Adrenal gland (tissue), 19 donors: ENCODE measurements at regions of chr17 and their contacts with region 1.

Region 1: DNA sequence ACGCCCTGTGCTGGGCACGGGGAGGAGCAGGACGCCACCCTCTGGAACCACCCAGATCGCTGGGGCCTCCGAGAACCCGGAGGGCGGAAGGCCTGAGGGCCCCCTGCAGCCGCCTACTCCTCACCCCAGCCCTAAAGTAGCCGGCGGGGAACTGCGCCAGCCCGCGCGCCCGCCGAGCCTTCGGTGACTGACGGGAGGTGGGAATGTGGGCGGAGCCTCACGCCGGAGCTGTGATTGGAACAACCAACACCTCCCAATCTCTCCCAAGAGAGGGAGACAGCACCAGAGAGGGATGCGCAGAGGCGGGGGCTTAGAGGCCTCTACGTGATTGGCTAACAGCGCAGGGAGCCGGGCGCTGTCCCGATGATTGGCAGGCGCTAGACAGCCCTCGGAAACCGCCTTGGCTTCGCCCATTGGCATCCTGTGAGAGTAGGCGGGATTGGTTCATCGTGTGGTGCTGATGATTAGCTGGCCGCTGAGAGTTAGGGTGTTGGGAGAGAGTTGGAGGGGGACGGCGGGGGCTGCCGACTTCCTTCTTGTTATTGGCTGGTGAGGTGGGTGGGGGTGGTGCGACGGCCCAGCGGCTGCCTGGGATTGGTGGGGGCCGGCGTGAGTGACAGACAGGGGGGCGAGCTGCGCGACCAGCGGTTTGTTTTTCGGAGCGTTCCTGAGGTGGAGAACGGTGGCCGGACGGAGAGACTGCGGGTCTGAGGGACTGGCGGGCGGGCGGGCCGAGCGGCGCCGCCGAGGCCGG is at the start of gene MAP3K3:
- DNase-seq: peak; percentile 98 to 100 (median 100)
- H3K4me3 ChIP-seq: peak within 1 kb of the TSS; percentile 31 to 90 (median 75)
- H3K27ac ChIP-seq: peak within 1 kb of the TSS in 4 of 5 donors; percentile 68 to 97 (median 82)
- H3K4me1 ChIP-seq: peaks cover 8 to 41% of the 10 kb centered on the region in 2 donors
- H3K27me3 ChIP-seq: no peaks in the 10 kb centered on the region
- CTCF ChIP-seq: peak in 2 of 6 experiments; percentile 20 to 33
- POLR2A ChIP-seq: peak; percentile 68 to 84
- total RNA-seq, gene MAP3K3: 16.5 to 47.1 (median 36.6) TPM

Region 2: DNA sequence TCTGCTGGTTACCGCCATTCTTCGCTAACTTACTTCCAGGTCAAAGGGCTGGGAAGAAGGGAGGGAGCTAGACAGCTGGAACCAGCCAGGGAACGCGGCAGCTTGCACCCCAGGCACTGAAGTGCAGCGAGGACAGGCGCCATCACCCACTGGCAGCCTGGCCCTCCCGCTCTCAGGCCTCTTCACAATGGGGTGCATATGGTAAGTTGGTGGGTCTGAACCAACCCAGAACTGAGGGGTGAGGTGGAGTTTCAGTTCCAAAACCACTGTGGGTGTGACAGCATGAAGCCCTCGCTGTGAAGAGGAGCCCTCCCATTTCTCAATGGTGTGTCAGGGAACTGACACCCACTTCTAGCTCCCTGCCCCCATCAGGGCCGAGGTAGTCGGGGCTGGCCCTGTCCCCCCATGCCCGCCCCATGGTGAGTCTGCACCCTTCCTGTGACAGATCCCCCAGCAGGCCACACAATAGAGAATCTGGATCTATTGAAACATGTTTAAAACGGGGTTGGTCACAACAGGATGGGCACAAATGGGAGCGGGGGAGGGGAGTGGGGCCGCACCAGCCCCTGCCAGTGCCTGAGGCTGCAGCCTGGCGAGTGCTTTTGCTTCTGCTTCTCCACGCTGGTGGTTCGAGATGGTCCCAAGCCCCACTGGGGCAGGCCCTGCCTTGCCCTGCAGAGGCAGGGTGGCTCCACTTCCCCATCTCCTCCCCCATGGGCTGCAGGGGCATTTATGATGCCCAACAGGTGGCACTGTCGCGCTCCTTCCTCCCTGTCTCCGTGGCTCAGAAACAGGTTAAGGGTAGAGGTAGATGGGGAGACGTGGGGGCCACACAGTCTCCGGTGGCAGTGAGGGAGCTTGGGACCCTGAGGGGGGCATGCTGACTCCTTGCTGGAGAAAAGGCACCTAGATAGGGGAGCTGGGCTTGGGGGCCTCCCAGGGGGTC is 75.7 kb after region 1 on chr17:
- intact Hi-C with region 1: loop called (anchors 5 to 10 kb)
- DNase-seq: peak in 6 of 7 donors; percentile 33 to 77 (median 56)
- H3K4me3 ChIP-seq: peak overlapping the region in 1 of 4 donors; percentile 91
- H3K27ac ChIP-seq: peak overlapping the region in 2 of 5 donors; percentile 13 to 21
- H3K4me1 ChIP-seq: peaks cover 10 to 15% of the 10 kb centered on the region in 2 donors
- H3K27me3 ChIP-seq: no peaks in the 10 kb centered on the region
- CTCF ChIP-seq: peak; percentile 22 to 55 (median 42)
- POLR2A ChIP-seq: no peak

Region 3: GRCh38 chr17:63798572-63799106 is 176.7 kb after region 1 on chr17:
- intact Hi-C with region 1: no loop called
- DNase-seq: no peak
- H3K4me3 ChIP-seq: no peak overlapping the region
- H3K27ac ChIP-seq: no peak overlapping the region
- H3K4me1 ChIP-seq: peaks cover 0 to 4% of the 10 kb centered on the region in 2 donors
- H3K27me3 ChIP-seq: no peaks in the 10 kb centered on the region
- CTCF ChIP-seq: no peak
- POLR2A ChIP-seq: no peak